Heart left ventricle (tissue), 16 donors: ENCODE measurements at regions of chr14 and their contacts with region 1.

Region 1: GRCh38 chr14:68685419-68686204 is 107.3 kb downstream of the ZFP36L1 start:
- DNase-seq: peak in 1 of 5 donors; percentile 19
- ATAC-seq: no peak
- H3K4me3 ChIP-seq: no peak overlapping the region
- H3K27ac ChIP-seq: peak overlapping the region in 3 of 12 donors; percentile 34 to 95 (median 84)
- H3K4me1 ChIP-seq: peaks cover 6 to 65% (median 41%) of the 10 kb centered on the region in 12 donors
- H3K27me3 ChIP-seq: no peaks in the 10 kb centered on the region
- CTCF ChIP-seq: no peak
- POLR2A ChIP-seq: no peak

Region 2: GRCh38 chr14:68506021-68506644 is 179.5 kb before region 1 on chr14:
- intact Hi-C with region 1: no loop called
- DNase-seq: peak in 2 of 5 donors; percentile 28 to 55
- ATAC-seq: peak in 2 of 4 donors; percentile 18 to 50
- H3K4me3 ChIP-seq: no peak overlapping the region
- H3K27ac ChIP-seq: peak overlapping the region in 9 of 12 donors; percentile 4 to 62 (median 29)
- H3K4me1 ChIP-seq: peaks cover 0 to 44% (median 31%) of the 10 kb centered on the region in 12 donors
- H3K27me3 ChIP-seq: no peaks in the 10 kb centered on the region
- CTCF ChIP-seq: no peak
- POLR2A ChIP-seq: no peak

Region 3: DNA sequence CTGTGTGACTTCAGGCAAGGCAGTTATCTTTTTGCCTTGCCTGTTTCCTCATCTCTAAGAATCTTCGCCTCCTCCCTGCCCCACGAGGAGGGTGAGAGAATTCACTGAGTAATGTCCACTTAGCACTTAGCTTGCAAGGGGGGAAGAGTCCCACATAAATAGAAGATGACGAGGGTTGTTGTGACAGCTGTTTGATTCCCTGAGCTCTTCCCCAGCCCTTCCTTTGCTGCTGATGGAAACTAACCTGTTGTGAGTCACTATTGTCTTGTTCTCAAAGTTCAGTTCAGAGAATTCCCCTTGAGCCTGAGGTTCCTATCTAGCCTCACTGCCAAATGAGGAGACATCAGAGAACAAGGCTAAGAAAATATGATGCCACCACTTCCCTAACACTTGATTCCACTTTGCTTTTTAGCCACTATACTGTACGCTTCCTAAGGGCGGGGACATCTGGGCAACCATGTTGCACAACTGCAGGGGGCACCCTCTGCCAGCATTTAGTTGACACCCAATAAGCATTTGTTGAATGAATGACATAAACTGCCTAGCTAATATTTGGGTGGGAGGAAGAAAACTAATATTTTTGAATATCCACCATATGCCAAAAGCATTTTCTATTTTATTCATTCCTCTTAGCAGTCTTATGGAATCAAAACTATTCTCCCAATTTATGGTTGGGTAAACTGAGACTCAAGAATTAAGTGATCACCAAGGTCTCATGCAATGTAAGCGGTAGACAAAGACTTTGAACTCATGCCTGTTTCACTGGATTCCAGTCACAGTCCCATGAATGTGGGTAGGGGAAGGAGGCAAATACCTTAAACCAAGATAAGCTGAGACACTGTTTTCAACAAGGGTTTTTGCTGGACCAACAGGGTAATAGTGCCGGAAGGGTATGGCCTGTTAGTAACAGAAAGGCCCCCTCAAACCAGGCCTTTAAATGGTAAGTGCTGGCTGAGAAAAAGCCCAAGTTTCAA is 29.7 kb after region 1 on chr14:
- intact Hi-C with region 1: no loop called
- DNase-seq: no peak
- ATAC-seq: peak in 3 of 4 donors; percentile 35 to 62 (median 53)
- H3K4me3 ChIP-seq: no peak overlapping the region
- H3K27ac ChIP-seq: peak overlapping the region in 1 of 12 donors; percentile 46
- H3K4me1 ChIP-seq: peaks cover 0 to 41% (median 0%) of the 10 kb centered on the region in 12 donors
- H3K27me3 ChIP-seq: no peaks in the 10 kb centered on the region
- CTCF ChIP-seq: no peak
- POLR2A ChIP-seq: no peak

Region 4: DNA sequence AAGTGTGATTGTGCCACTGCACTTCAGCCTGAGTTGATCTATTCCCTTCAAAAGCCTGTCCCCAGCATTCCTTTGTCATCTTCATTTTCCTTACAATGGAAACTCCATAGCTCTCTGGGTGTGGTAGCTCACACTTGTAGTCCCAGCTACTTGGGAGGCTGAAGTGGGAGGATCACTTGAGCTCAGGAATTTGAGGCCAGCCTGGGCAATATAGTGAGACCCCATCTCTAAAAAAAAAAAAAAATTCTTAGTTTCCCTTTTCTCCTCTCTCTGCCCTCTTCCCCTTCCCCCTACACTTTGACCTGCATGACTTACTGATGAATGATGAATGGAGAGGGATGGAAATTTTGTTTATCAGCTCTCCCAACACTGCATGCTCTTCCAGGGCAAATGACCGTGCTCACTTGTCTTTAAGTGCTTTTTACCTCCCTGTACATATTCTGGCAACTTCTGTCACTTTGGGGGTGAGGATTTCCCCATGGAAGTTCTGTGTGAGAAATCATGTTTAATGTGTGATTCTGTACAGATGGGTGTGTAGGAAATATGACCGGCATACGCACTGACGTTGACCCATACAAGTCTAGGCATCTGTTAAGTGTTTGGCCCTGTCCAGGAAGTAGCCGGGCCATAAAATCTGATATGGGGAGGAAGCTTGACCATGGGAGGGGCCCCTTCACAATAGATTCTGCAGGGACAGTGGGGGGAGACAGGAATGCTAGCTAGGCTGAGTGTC is 41.9 kb after region 1 on chr14:
- intact Hi-C with region 1: loop called in 3 of 10 experiments (anchors 2 to 5 kb)
- DNase-seq: peak in 4 of 5 donors; percentile 36 to 57 (median 48)
- ATAC-seq: peak; percentile 34 to 81 (median 62)
- H3K4me3 ChIP-seq: no peak overlapping the region
- H3K27ac ChIP-seq: peak overlapping the region in 9 of 12 donors; percentile 1 to 78 (median 51)
- H3K4me1 ChIP-seq: peaks cover 4 to 59% (median 39%) of the 10 kb centered on the region in 12 donors
- H3K27me3 ChIP-seq: no peaks in the 10 kb centered on the region
- CTCF ChIP-seq: no peak
- POLR2A ChIP-seq: no peak

Region 5: DNA sequence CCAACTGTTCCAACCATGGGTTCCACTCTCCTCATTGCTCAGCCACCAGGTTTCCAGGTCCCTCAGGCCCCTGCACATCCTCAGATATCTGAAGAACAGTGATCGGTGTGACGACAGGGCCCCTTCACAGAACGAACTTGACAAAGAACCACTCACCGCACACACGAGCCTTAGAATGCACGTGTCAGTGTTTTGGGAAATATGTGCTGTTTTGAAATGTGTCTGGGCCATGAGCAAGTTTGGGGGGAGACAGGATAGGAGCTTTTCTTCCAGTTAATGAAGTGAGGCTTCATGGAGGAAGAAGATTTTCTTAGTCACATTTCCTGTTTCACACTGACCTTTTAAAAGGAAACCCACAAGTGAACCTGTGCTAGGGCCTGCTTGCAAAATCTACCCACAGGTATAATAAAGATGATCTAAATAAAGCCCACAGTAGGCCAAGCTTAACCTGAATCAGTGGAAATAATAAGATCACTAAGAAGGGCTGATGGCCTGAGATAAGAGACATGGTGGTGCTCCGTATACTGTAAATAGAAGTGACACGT is 48.7 kb after region 1 on chr14:
- intact Hi-C with region 1: loop called in 3 of 10 experiments (anchors 2 to 5 kb)
- DNase-seq: no peak
- ATAC-seq: peak in 1 of 4 donors; percentile 7
- H3K4me3 ChIP-seq: no peak overlapping the region
- H3K27ac ChIP-seq: peak overlapping the region in 5 of 12 donors; percentile 30 to 79 (median 47)
- H3K4me1 ChIP-seq: peaks cover 0 to 82% (median 47%) of the 10 kb centered on the region in 12 donors
- H3K27me3 ChIP-seq: no peaks in the 10 kb centered on the region
- CTCF ChIP-seq: no peak
- POLR2A ChIP-seq: no peak